ENCODE measurements at regions of chr2 and their contacts with region 1.

Region 1: DNA sequence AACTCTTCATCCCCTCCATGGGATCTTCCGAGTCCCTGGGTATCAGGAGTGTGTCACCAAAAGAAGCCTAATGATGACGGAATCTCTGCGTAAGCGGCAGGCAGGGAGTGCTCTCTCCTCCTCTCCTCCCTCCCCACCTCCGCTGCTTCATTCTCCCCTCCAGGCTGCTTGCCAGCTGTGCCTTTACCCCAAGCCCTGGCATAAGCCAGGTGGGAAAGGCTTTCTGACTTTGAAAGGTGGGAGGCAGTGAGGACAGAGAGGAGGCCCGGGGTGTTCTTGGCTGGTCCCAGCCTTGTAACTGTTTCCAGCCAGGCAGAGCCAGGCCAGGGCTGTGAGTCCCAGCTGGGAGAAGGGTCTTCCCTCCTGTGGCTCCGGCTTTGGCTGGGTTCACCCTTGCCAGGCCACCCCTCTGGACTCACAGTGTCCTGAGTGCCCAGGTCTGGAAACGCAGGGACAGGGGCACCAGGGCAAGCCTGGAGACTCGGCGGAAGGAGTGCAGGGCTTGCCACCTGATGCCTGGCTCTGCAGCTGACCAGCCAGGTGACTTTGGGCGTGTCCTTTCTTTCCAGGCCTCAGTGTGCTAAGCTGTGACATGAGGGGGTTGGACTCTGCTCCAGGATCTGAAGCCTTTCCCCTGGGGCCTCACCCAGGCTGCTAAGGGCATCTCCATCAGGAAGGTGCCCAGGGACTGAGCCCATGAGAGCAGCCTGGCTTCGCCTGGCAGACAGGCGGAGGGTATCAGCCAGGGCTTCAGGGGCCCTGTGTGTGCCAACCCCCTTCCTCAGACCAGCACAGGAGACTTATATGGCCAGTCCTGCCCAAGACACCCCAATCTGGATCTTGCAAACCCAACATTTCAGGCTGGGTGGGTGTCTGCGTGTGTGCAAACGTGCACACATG is 32.7 kb upstream of the HPCAL1 start:
- H3K4me3 Mint-ChIP-seq: no peak overlapping the region
- H3K27ac Mint-ChIP-seq: no peak overlapping the region
- H3K4me1 Mint-ChIP-seq: peaks cover 23% of the 10 kb centered on the region
- H3K27me3 Mint-ChIP-seq: peaks cover 12% of the 10 kb centered on the region

Region 2: DNA sequence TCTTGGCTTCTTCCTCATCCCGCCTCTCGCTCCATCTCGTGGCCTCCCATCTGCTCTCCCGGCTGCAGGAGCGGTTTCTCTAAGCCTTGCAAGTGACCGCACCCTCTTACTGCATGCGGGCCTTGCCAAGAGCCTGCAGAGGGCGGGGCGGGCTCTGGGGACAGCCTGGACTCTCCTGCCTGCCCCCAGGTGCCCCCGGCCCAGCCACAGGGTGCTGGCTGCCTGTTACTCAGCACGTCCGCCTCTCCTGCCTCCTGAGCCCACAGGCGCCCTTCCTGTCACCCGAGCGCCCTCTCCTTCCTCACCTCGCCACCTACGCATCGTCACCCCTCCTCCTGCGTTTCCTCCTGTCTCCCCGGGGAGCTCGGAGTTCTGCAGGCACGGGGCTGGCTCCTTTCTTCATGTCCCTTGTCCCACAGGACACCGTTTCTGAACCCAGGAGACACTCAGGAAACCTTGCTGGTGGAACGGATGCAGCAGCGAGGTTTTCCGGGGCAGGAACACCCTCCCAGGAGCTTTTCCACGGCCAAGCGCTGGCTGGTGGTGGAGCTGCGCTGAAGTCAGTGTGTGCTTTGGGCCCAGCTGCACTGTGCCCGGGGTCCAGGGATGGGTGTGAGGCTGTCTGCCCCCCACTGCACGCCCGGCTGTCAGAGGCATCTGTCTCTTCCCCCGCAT is 61.2 kb after region 1 on chr2:
- intact Hi-C with region 1: loop called (anchors 2 kb)
- H3K4me3 Mint-ChIP-seq: peak overlapping the region; percentile 63
- H3K27ac Mint-ChIP-seq: peak overlapping the region; percentile 95
- H3K4me1 Mint-ChIP-seq: peaks cover 77% of the 10 kb centered on the region
- H3K27me3 Mint-ChIP-seq: no peaks in the 10 kb centered on the region

Region 3: GRCh38 chr2:10434886-10435819 is 165.2 kb after region 1 on chr2:
- intact Hi-C with region 1: loop called (anchors 1 kb)
- H3K4me3 Mint-ChIP-seq: no peak overlapping the region
- H3K27ac Mint-ChIP-seq: no peak overlapping the region
- H3K4me1 Mint-ChIP-seq: peaks cover 29% of the 10 kb centered on the region
- H3K27me3 Mint-ChIP-seq: peaks cover 14% of the 10 kb centered on the region

Measured in dendritic cell treated with granulocyte-macrophage colony-stimulating factor and Interleukin-4, amounts not matched to agents 40 ng/mL and 50 ng/mL, for 4 days (primary cell).